ENCODE measurements at regions of chr19 and their contacts with region 1.

Region 1: DNA sequence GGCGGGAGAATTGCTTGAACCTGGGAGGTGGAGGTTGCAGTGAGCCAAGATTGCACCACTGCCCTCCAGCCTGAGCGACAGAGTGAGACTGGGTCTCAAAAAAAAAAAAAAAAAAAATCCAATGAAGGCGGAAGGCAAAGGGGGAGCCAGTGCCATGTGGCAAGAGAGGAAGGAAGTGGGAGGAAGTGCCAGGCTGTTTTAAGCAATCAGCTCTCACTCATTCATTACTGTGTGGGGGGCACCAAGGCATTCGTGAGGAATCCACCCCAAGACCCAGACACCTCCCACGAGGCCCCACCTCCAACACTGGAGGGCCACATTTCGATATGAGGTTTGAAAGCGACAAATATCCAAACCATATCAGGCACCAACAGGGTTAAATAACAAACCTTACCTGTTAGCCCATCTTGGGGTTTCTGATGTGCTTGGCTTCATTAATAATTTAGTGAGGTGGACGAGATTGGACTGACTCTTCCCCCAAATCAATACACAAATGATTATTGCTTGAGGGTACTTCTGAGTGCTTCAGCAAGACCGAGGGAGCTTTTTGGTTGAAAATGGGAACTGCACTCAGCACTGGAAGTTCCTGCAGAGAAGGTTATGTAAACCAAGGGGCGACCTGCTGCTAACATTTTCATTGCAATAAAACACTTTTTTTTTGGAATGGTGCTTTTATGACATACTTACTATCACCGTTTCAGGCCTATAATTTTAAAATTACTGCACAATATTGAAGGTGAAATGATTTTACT is 7.5 kb upstream of the LRP3 start:
- DNase-seq: peak; percentile 1
- ATAC-seq: no peak
- H3K4me3 Mint-ChIP-seq: peak overlapping the region; percentile 47
- H3K27ac Mint-ChIP-seq: no peak overlapping the region
- H3K4me1 Mint-ChIP-seq: peaks cover 15% of the 10 kb centered on the region
- H3K27me3 Mint-ChIP-seq: peaks cover 9% of the 10 kb centered on the region
- CTCF ChIP-seq: no peak

Region 2: GRCh38 chr19:33022472-33023116 is 164.0 kb before region 1 on chr19:
- CTCF ChIA-PET with region 1: interaction called, 12 read pairs
- POLR2A ChIA-PET with region 1: no interaction called
- DNase-seq: peak; percentile 76
- ATAC-seq: peak; percentile 96
- H3K4me3 Mint-ChIP-seq: peak overlapping the region; percentile 54
- H3K27ac Mint-ChIP-seq: peak overlapping the region; percentile 98
- H3K4me1 Mint-ChIP-seq: peaks cover 29% of the 10 kb centered on the region
- H3K27me3 Mint-ChIP-seq: no peaks in the 10 kb centered on the region
- CTCF ChIP-seq: 0 out of 2 replicates have a peak, but pooled peaks have one; percentile 19

Region 3: DNA sequence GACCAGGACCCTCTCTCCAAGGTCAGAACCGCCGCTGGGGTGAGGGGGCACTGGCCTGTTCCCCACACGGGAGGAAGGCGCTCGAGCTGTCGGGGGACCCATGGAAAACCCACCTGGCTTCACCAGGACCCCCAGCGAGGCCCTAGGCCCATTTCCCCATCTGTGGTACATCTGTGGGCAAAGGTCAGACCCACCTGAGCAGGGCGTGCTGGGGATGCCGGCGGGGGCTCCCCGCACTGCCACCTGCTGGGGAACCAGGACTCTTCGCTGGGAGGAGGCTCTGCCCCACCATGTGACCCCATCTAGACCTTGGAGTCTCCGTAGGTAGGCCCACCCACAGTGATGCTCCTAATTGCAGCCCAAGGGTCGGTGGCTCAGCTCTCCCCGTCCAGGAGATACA is 54.2 kb before region 1 on chr19:
- CTCF ChIA-PET with region 1: interaction called, 63 read pairs
- POLR2A ChIA-PET with region 1: no interaction called
- DNase-seq: peak; percentile 53
- ATAC-seq: peak; percentile 67
- H3K4me3 Mint-ChIP-seq: no peak overlapping the region
- H3K27ac Mint-ChIP-seq: no peak overlapping the region
- H3K4me1 Mint-ChIP-seq: peaks cover 9% of the 10 kb centered on the region
- H3K27me3 Mint-ChIP-seq: no peaks in the 10 kb centered on the region
- CTCF ChIP-seq: no peak

Region 4: GRCh38 chr19:33208904-33209849 is 22.6 kb after region 1 on chr19:
- CTCF ChIA-PET with region 1: interaction called, 12 read pairs
- POLR2A ChIA-PET with region 1: no interaction called
- DNase-seq: no peak
- ATAC-seq: no peak
- H3K4me3 Mint-ChIP-seq: no peak overlapping the region
- H3K27ac Mint-ChIP-seq: no peak overlapping the region
- H3K4me1 Mint-ChIP-seq: no peaks in the 10 kb centered on the region
- H3K27me3 Mint-ChIP-seq: no peaks in the 10 kb centered on the region
- CTCF ChIP-seq: no peak

Region 5: GRCh38 chr19:33226550-33227241 is 40.1 kb after region 1 on chr19:
- CTCF ChIA-PET with region 1: interaction called, 10 read pairs
- POLR2A ChIA-PET with region 1: no interaction called
- DNase-seq: peak; percentile 78
- ATAC-seq: peak; percentile 81
- H3K4me3 Mint-ChIP-seq: peak overlapping the region; percentile 79
- H3K27ac Mint-ChIP-seq: no peak overlapping the region
- H3K4me1 Mint-ChIP-seq: peaks cover 13% of the 10 kb centered on the region
- H3K27me3 Mint-ChIP-seq: peaks cover 61% of the 10 kb centered on the region
- CTCF ChIP-seq: no peak

Region 6: DNA sequence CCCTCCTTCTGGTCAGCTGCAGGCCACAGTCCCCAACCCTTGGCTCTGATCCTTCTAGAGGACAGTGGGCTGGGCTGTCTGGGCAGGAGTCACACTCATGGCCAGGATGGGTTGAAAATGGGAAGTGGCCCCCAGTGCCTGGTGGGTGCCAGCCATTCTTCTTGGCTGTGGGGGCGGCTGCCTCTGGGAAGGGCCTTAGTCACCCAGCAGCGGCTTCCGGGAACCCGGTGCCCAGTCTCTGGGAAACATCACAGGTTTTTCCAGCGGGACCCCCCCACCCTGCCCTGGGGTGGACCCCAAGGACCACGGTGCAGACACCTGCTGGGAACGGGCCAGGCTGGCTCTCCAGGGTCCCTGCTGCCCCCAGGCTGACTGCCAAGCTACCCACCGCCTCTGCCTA is 66.4 kb after region 1 on chr19:
- CTCF ChIA-PET with region 1: no interaction called
- POLR2A ChIA-PET with region 1: no interaction called
- DNase-seq: no peak
- ATAC-seq: no peak
- H3K4me3 Mint-ChIP-seq: no peak overlapping the region
- H3K27ac Mint-ChIP-seq: no peak overlapping the region
- H3K4me1 Mint-ChIP-seq: 0 out of 2 replicates have a peak, but pooled peaks cover 3% of the 10 kb centered on the region
- H3K27me3 Mint-ChIP-seq: no peaks in the 10 kb centered on the region
- CTCF ChIP-seq: no peak

Region 7: DNA sequence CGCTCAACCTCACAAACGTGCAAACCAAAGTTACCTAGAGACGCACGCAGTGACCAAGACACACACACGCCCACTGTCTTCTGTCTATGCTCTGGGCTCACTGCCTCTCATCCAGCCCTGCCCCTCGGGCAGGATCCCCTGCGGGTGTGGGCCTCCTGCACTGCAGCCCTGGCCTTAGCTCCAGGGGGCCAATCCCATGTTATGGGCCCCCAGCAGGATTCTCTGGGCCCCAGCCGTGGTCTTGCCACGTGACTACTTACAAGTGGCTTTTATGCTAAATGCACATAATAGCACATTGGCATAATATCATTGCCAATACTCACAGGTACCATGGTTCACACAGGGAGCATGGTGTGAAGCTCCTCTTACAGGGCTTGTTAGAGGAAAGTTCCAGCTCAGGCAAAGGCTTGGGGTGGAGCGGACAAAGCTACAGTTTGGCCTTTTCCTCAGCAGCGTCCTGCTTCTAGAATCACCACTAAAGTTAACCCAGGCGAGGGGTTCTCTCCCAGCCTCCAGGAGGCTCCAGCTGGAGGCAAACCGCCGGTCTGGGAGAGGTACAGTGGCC is 78.4 kb after region 1 on chr19:
- CTCF ChIA-PET with region 1: no interaction called
- POLR2A ChIA-PET with region 1: no interaction called
- DNase-seq: no peak
- ATAC-seq: no peak
- H3K4me3 Mint-ChIP-seq: no peak overlapping the region
- H3K27ac Mint-ChIP-seq: no peak overlapping the region; the same call in 1 of the 2 replicates
- H3K4me1 Mint-ChIP-seq: peaks cover 3% of the 10 kb centered on the region
- H3K27me3 Mint-ChIP-seq: no peaks in the 10 kb centered on the region
- CTCF ChIP-seq: no peak

Region 8: GRCh38 chr19:33416307-33417215 is 230.0 kb after region 1 on chr19:
- CTCF ChIA-PET with region 1: interaction called, 11 read pairs
- POLR2A ChIA-PET with region 1: no interaction called
- DNase-seq: peak; percentile 87
- ATAC-seq: peak; percentile 81
- H3K4me3 Mint-ChIP-seq: peak overlapping the region; percentile 63
- H3K27ac Mint-ChIP-seq: no peak overlapping the region; the same call in 1 of the 2 replicates
- H3K4me1 Mint-ChIP-seq: peaks cover 11% of the 10 kb centered on the region
- H3K27me3 Mint-ChIP-seq: no peaks in the 10 kb centered on the region
- CTCF ChIP-seq: peak; percentile 74

Region 9: GRCh38 chr19:33562636-33563035 is 376.0 kb after region 1 on chr19:
- CTCF ChIA-PET with region 1: no interaction called
- POLR2A ChIA-PET with region 1: no interaction called
- DNase-seq: no peak
- ATAC-seq: no peak
- H3K4me3 Mint-ChIP-seq: no peak overlapping the region
- H3K27ac Mint-ChIP-seq: no peak overlapping the region
- H3K4me1 Mint-ChIP-seq: peaks cover 27% of the 10 kb centered on the region
- H3K27me3 Mint-ChIP-seq: no peaks in the 10 kb centered on the region; the same call in 1 of the 2 replicates
- CTCF ChIP-seq: no peak

Measured in WTC11 (cell line).